ENCODE measurements at regions of chr1 and their contacts with region 1.

Region 1: GRCh38 chr1:8396786-8397406 is 79.0 kb downstream of the SLC45A1 start:
- DNase-seq: peak; percentile 71
- H3K4me3 Mint-ChIP-seq: peak overlapping the region; percentile 32
- H3K27ac Mint-ChIP-seq: peak overlapping the region; percentile 84
- H3K4me1 Mint-ChIP-seq: peaks cover 53% of the 10 kb centered on the region
- H3K27me3 Mint-ChIP-seq: no peaks in the 10 kb centered on the region

Region 2: DNA sequence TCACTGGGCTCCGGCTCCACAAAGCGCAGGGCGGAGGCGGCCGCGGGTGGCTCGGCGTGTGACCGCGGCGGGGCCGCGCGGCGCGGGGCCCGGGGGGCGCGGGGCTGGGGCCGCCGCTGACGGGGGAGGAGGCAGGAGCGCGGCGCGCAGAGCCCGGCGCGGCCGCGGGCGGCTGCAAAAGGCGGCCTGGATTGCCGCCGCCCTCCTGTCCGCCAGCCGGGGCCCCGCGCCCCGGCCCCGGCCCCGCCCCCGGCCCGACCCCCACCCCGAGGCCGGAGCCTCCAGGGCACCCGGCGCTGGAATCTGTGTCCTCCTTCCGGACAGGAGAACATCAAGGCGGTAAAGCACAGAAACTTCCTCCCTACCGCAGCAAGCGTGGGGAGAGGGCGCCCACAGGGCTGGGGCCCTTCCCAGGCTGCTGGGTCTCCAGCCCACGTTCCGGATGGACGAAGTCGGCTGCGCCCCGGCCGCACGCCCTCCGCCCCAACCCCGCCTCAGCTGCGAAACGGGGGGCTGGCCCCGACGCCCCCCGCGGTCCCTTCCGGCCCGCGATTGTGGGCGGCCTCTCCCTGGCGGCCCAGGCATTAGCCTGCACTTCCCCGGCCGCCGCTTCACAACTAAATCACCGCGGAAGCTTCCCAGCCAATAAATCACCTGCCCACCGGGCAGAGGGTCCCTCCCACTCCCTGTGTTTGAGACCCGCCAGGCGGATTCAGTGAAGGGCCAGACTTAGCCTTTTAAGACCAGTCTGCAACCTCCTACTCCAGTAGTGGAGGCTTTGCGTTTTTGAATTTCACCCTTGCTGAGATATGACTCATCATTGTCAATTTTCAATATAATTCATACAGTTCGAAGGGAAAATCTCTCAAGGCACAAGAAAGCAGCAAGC is 27.0 kb after region 1 on chr1:
- intact Hi-C with region 1: loop called (anchors 1 kb)
- DNase-seq: peak; percentile 83
- H3K4me3 Mint-ChIP-seq: peak overlapping the region; percentile 86
- H3K27ac Mint-ChIP-seq: peak overlapping the region; percentile 90
- H3K4me1 Mint-ChIP-seq: peaks cover 40% of the 10 kb centered on the region
- H3K27me3 Mint-ChIP-seq: no peaks in the 10 kb centered on the region

Region 3: DNA sequence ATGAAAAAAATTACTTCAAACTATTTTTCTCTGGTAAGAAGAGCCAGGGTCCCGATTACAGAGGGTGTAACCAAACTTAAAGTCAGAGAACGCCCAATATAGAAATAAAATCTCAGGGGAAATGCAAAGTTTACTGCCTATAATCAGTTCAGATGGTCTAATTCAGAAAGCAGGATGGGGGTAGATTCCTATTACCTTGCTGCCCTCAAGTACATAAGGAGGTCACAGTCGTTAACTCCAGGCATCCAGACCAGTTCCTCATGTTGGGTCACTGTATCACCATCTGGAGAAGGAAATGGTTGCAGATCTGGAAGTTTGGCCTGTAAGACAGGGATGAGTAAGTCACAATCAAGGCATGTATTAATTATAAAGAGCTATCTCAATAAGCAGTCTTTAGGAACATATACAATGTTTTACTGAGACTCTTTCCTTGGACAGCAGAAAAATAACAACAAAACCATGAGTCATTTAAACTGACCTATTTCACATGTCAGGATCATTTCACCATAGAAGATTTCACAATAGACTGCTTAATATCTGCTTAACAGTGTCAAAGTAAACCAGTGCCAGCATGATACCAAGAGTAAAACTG is 100.4 kb after region 1 on chr1:
- intact Hi-C with region 1: loop called (anchors 1 kb)
- DNase-seq: no peak
- H3K4me3 Mint-ChIP-seq: no peak overlapping the region
- H3K27ac Mint-ChIP-seq: peak overlapping the region; percentile 34
- H3K4me1 Mint-ChIP-seq: peaks cover 29% of the 10 kb centered on the region
- H3K27me3 Mint-ChIP-seq: no peaks in the 10 kb centered on the region

Region 4: GRCh38 chr1:8554956-8555534 is 158.1 kb after region 1 on chr1:
- intact Hi-C with region 1: loop called (anchors 5 kb)
- DNase-seq: no peak
- H3K4me3 Mint-ChIP-seq: no peak overlapping the region
- H3K27ac Mint-ChIP-seq: peak overlapping the region; percentile 83
- H3K4me1 Mint-ChIP-seq: peaks cover 41% of the 10 kb centered on the region
- H3K27me3 Mint-ChIP-seq: no peaks in the 10 kb centered on the region

Measured in activated CD4-positive, alpha-beta T cell treated with anti-CD3 and anti-CD28 coated beads, Interleukin-2, amount 10 ng/mL, durations not matched to agents 24 days and 14 days (primary cell).